ENCODE measurements at regions of chr1 and their contacts with region 1.

Region 1: GRCh38 chr1:207828485-207829158 is 76.8 kb downstream of the CD46 start:
- DNase-seq: peak; percentile 58 to 72 (median 62)
- H3K4me3 ChIP-seq: no peak overlapping the region
- H3K4me3 Mint-ChIP-seq: peak overlapping the region in 4 of 8 donors; percentile 0 to 55 (median 26)
- H3K27ac ChIP-seq: peak overlapping the region; percentile 86
- H3K27ac Mint-ChIP-seq: peak overlapping the region; percentile 71 to 100 (median 99)
- H3K4me1 ChIP-seq: peaks cover 95% of the 10 kb centered on the region
- H3K4me1 Mint-ChIP-seq: peaks cover 73 to 95% (median 88%) of the 10 kb centered on the region in 4 donors
- H3K27me3 ChIP-seq: no peaks in the 10 kb centered on the region
- H3K27me3 Mint-ChIP-seq: peaks cover 2 to 4% of the 10 kb centered on the region in 2 donors

Region 2: GRCh38 chr1:207805841-207806421 is 22.7 kb before region 1 on chr1:
- CTCF ChIA-PET with region 1: interaction called, 16 read pairs
- POLR2A ChIA-PET with region 1: interaction called, 17 read pairs
- intact Hi-C with region 1: no loop called
- DNase-seq: no peak
- H3K4me3 ChIP-seq: no peak overlapping the region
- H3K4me3 Mint-ChIP-seq: no peak overlapping the region
- H3K27ac ChIP-seq: no peak overlapping the region
- H3K27ac Mint-ChIP-seq: peak overlapping the region; percentile 36 to 93 (median 80)
- H3K4me1 ChIP-seq: peaks cover 45% of the 10 kb centered on the region
- H3K4me1 Mint-ChIP-seq: peaks cover 39 to 80% (median 48%) of the 10 kb centered on the region in 4 donors
- H3K27me3 ChIP-seq: no peaks in the 10 kb centered on the region
- H3K27me3 Mint-ChIP-seq: no peaks in the 10 kb centered on the region

Region 3: DNA sequence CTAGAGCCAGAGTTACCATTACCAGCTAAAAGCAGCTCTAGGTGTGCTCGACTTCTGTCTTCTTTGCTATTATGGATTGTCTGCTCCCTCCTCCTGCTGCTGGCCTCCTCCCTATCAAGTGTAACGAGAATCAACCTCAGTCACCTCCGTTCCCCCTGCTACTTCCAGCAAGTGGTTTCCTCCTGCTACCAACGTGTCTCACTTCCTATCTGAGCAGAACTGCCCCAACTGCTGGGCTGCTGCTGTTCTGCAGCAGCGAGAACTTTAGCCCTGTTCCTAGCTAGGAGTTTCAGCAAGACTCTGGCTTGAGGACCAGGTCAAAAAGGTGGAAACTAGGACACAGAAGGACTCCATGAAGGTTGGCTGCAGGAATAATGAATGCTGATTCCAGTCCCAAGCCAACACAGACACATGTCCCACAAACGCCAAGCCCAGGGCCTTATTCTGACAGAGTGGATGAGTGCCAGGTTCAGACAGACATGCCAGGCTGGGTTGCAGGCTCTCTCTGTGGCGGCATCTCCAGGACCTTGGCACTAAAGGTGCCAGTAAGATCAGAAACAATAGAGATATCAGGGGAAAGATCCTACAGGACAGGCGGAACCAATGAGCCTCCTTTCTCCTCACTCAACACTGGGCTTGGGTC is 35.4 kb after region 1 on chr1:
- CTCF ChIA-PET with region 1: interaction called, 494 read pairs
- POLR2A ChIA-PET with region 1: interaction called, 374 read pairs
- intact Hi-C with region 1: loop called (anchors 1 kb)
- DNase-seq: peak; percentile 43 to 75 (median 49)
- H3K4me3 ChIP-seq: no peak overlapping the region
- H3K4me3 Mint-ChIP-seq: peak overlapping the region; percentile 45 to 89 (median 72)
- H3K27ac ChIP-seq: peak overlapping the region; percentile 48
- H3K27ac Mint-ChIP-seq: peak overlapping the region; percentile 73 to 95 (median 86)
- H3K4me1 ChIP-seq: peaks cover 88% of the 10 kb centered on the region
- H3K4me1 Mint-ChIP-seq: peaks cover 55 to 74% (median 60%) of the 10 kb centered on the region in 4 donors
- H3K27me3 ChIP-seq: no peaks in the 10 kb centered on the region
- H3K27me3 Mint-ChIP-seq: no peaks in the 10 kb centered on the region

Region 4: DNA sequence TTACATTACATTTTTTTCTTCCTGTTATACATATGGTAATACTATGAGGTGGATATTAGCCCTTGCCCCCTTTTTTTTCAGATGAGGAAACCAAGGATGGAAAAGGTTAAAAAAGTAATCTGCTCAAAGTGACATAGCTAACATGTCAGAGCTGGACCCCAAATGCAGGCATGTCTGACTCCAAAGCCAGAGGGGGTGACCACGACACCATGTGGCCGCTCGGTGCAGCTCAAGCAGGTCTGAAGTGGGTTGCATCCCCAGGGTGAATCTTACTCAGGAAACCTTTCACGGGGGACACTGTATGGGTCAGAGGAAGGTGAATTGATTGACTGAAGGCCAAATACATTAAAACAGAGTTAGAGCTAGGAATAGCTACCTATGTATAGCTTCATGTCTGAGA is 47.5 kb after region 1 on chr1:
- CTCF ChIA-PET with region 1: interaction called, 494 read pairs
- POLR2A ChIA-PET with region 1: interaction called, 16 read pairs
- intact Hi-C with region 1: loop called (anchors 1 kb)
- DNase-seq: no peak
- H3K4me3 ChIP-seq: no peak overlapping the region
- H3K4me3 Mint-ChIP-seq: peak overlapping the region in 1 of 8 donors; percentile 59
- H3K27ac ChIP-seq: no peak overlapping the region
- H3K27ac Mint-ChIP-seq: peak overlapping the region in 2 of 7 donors; percentile 18 to 65
- H3K4me1 ChIP-seq: peaks cover 45% of the 10 kb centered on the region
- H3K4me1 Mint-ChIP-seq: peaks cover 40 to 59% (median 47%) of the 10 kb centered on the region in 4 donors
- H3K27me3 ChIP-seq: no peaks in the 10 kb centered on the region
- H3K27me3 Mint-ChIP-seq: no peaks in the 10 kb centered on the region

Region 5: GRCh38 chr1:207963427-207964194 is 135.0 kb after region 1 on chr1:
- CTCF ChIA-PET with region 1: interaction called, 27 read pairs
- POLR2A ChIA-PET with region 1: interaction called, 5 read pairs
- intact Hi-C with region 1: loop called (anchors 1 kb)
- DNase-seq: peak; percentile 66 to 85 (median 80)
- H3K4me3 ChIP-seq: peak overlapping the region; percentile 27 to 86
- H3K4me3 Mint-ChIP-seq: peak overlapping the region; percentile 81 to 93 (median 87)
- H3K27ac ChIP-seq: peak overlapping the region; percentile 48
- H3K27ac Mint-ChIP-seq: peak overlapping the region in 2 of 7 donors; percentile 17 to 33
- H3K4me1 ChIP-seq: peaks cover 21% of the 10 kb centered on the region
- H3K4me1 Mint-ChIP-seq: peaks cover 4 to 22% (median 14%) of the 10 kb centered on the region in 4 donors
- H3K27me3 ChIP-seq: peaks cover 14% of the 10 kb centered on the region
- H3K27me3 Mint-ChIP-seq: peaks cover 19 to 27% of the 10 kb centered on the region in 2 donors

Region 6: DNA sequence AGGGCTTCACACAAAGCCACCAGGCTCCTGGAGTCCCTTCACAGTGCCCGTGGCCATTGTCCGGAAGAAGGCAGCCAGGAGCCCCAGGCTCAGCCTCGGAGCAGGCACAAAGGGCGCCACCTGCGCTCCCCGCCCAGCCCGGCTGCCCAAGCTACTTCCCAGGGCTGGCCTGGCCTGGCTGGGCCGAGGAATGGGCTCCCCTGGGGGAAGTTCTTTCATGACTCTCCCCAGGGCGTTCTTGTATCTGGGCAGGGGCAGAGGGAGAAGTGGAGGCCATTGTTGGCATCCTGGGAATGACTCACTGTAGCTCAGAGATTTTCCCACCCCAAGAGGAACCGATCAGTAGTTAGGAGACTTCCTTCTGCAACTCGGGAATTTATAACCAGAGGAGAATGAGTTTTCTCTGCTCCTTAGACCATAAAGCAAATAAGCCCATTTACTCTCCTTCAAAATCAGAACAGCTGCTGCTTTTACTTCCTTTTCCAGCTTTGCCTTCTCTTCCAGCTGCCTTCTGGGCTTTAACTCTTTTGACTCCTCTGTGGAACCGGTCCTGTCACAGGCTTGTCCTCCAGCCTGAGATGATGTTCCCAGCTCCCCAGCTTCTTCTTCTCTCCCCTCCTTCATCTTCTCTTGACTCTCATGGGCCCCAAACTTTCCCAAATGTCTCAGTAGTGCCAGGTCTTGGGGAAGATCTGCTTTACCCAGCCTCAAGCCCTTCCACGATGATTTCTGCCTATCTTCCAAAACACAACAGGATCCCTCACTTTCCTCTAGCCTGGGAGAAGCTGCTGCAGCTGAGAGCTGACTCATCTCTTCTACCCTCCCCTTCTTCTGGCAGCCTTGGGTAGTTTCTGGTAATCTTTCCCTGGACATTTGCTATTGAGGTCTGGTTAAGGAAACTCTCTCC is 201.0 kb after region 1 on chr1:
- CTCF ChIA-PET with region 1: no interaction called
- POLR2A ChIA-PET with region 1: no interaction called
- intact Hi-C with region 1: no loop called
- DNase-seq: no peak
- H3K4me3 ChIP-seq: no peak overlapping the region
- H3K4me3 Mint-ChIP-seq: no peak overlapping the region
- H3K27ac ChIP-seq: no peak overlapping the region
- H3K27ac Mint-ChIP-seq: no peak overlapping the region
- H3K4me1 ChIP-seq: no peaks in the 10 kb centered on the region
- H3K4me1 Mint-ChIP-seq: no peaks in the 10 kb centered on the region
- H3K27me3 ChIP-seq: no peaks in the 10 kb centered on the region
- H3K27me3 Mint-ChIP-seq: peaks cover 4 to 6% of the 10 kb centered on the region in 2 donors

Region 7: GRCh38 chr1:208291923-208292711 is 463.5 kb after region 1 on chr1:
- CTCF ChIA-PET with region 1: no interaction called
- POLR2A ChIA-PET with region 1: no interaction called
- intact Hi-C with region 1: no loop called
- DNase-seq: no peak
- H3K4me3 ChIP-seq: no peak overlapping the region
- H3K4me3 Mint-ChIP-seq: no peak overlapping the region
- H3K27ac ChIP-seq: no peak overlapping the region
- H3K27ac Mint-ChIP-seq: no peak overlapping the region
- H3K4me1 ChIP-seq: no peaks in the 10 kb centered on the region
- H3K4me1 Mint-ChIP-seq: no peaks in the 10 kb centered on the region
- H3K27me3 ChIP-seq: no peaks in the 10 kb centered on the region
- H3K27me3 Mint-ChIP-seq: peaks cover 19 to 25% of the 10 kb centered on the region in 2 donors